PC-3 (cell line): ENCODE measurements at regions of chrX and their contacts with region 1.

Region 1: GRCh38 chrX:16658284-16658683 is 8.3 kb downstream of the S100G start:
- DNase-seq: peak; percentile 88
- ATAC-seq: peak; percentile 75
- H3K4me3 ChIP-seq: no peak overlapping the region
- H3K27ac ChIP-seq: peak overlapping the region; percentile 97
- H3K4me1 ChIP-seq: peaks cover 54% of the 10 kb centered on the region
- H3K27me3 ChIP-seq: no peaks in the 10 kb centered on the region
- CTCF ChIP-seq: no peak

Region 2: DNA sequence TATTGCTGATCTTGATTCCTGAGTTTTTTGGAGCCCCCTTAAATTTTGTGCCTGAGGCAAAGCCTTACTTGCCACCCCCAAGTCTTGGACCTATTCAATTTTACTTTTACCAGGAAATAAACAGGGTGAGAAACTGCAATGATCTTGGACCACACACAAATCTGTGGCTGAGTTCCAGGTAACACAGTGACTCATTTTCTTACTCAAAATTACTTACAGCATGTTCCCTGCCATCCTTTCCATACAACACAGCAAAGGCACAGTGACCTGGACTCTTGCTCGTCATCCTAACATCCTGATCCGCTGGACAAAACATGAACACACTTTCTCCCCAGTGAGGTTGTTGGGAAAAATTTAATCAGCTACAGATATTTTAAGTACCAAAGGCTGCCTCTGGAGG is 69.1 kb before region 1 on chrX:
- CTCF ChIA-PET with region 1: no interaction called
- POLR2A ChIA-PET with region 1: no interaction called
- intact Hi-C with region 1: loop called (anchors 5 kb)
- DNase-seq: peak; percentile 79
- ATAC-seq: peak; percentile 83
- H3K4me3 ChIP-seq: no peak overlapping the region
- H3K27ac ChIP-seq: peak overlapping the region; percentile 91
- H3K4me1 ChIP-seq: peaks cover 40% of the 10 kb centered on the region
- H3K27me3 ChIP-seq: no peaks in the 10 kb centered on the region
- CTCF ChIP-seq: no peak

Region 3: GRCh38 chrX:16603822-16604221 is 54.5 kb before region 1 on chrX:
- CTCF ChIA-PET with region 1: no interaction called
- POLR2A ChIA-PET with region 1: no interaction called
- intact Hi-C with region 1: loop called (anchors 5 kb)
- DNase-seq: peak; percentile 86
- ATAC-seq: peak; percentile 96
- H3K4me3 ChIP-seq: no peak overlapping the region
- H3K27ac ChIP-seq: peak overlapping the region; percentile 93
- H3K4me1 ChIP-seq: peaks cover 23% of the 10 kb centered on the region
- H3K27me3 ChIP-seq: no peaks in the 10 kb centered on the region
- CTCF ChIP-seq: no peak

Region 4: DNA sequence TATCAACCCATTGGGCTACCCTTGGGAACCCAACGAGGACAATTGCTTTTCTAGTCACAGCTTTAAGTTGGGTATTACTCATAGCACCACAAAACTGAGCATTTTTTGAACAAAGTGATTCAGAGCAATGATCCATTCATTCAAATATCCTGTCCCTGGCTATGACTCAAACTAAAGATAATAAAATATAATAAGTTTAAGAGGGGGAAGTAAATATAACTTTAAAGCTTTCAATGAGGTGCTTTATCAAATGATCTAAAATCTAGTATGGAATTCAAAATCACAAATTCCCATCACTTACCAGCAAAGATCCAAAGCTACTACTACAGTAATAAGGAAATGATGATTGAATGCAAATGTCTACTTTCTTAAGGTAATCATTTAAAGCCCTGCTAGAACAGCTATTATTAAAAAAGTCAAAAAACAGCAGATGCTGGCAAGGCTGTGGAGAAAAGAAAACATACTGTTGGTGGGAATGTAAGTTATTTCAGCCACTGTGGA is 48.1 kb before region 1 on chrX:
- CTCF ChIA-PET with region 1: no interaction called
- POLR2A ChIA-PET with region 1: no interaction called
- intact Hi-C with region 1: loop called (anchors 2 kb)
- DNase-seq: peak; percentile 84
- ATAC-seq: peak; percentile 94
- H3K4me3 ChIP-seq: no peak overlapping the region
- H3K27ac ChIP-seq: peak overlapping the region; percentile 97
- H3K4me1 ChIP-seq: peaks cover 25% of the 10 kb centered on the region
- H3K27me3 ChIP-seq: no peaks in the 10 kb centered on the region
- CTCF ChIP-seq: no peak